ENCODE measurements at regions of chr12 and their contacts with region 1.

Region 1: DNA sequence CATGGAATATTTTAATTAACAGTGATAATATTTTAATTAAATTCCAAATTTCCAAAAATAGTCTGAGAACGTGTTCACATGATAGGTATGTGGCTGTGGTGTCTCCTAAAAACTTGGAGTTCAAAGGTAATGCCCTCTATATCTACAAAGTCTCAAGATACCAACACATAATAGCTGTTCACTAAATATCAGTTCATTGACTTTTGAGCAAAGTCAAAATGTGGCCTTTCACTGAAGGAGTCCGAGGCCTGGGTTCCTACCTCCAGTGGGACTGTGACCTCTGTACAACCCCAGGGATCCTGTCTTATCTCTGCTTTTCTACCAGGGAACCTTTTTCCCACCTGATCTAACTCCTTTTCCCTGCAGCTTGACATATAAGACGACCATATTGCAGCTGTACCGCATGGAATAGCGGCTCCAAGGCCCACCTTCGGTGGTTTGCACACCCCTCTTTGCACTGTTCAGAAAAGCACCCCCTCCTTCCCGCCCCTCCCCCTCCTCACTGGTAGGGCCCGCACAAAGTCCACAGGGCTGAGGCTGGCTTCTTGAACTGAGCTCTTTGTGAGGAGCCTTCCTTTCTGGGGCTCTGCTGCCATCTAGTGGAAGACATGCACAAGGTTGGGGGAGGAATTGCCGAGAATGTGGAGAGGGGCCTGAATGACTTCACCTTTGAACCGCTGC is 3.1 kb downstream of the CCND2 start:
- DNase-seq: peak; percentile 72 to 91 (median 81)
- H3K4me3 ChIP-seq: peak overlapping the region; percentile 2
- H3K4me3 Mint-ChIP-seq: peak overlapping the region; percentile 89 to 99 (median 97)
- H3K27ac ChIP-seq: no peak overlapping the region
- H3K27ac Mint-ChIP-seq: peak overlapping the region; percentile 52 to 100 (median 98)
- H3K4me1 ChIP-seq: peaks cover 59% of the 10 kb centered on the region
- H3K4me1 Mint-ChIP-seq: peaks cover 49 to 73% (median 67%) of the 10 kb centered on the region in 3 donors
- H3K27me3 ChIP-seq: no peaks in the 10 kb centered on the region
- H3K27me3 Mint-ChIP-seq: peaks cover 0 to 5% of the 10 kb centered on the region in 2 donors

Region 2: DNA sequence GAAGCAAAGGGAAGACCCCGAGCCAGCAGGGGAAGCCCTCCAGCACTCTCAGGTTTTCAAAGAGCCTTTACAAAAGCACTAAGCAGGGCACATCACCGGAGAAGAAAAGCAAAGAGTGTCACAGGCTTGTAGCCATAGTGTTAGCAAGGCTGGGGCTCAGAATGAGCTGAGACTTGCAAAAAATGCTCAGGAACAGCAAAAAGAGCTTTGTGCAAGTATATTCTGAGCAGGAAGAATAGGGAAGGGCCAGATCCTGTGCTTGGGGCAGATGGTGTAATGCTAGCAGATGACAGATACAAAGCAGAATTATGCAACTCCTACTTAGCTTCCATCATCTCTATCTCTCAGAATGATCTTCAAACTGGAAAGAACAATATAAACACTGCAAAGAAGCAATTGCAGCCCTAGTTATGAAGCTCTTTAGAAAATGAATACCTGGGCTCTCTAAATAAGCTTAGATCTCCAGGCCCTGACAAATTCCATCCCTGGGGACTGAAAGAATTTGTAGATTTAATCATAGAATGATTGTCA is 379.8 kb before region 1 on chr12:
- CTCF ChIA-PET with region 1: interaction called, 15 read pairs
- POLR2A ChIA-PET with region 1: interaction called, 6 read pairs
- DNase-seq: no peak
- H3K4me3 ChIP-seq: peak overlapping the region; percentile 0
- H3K4me3 Mint-ChIP-seq: peak overlapping the region; percentile 24 to 77 (median 75)
- H3K27ac ChIP-seq: no peak overlapping the region
- H3K27ac Mint-ChIP-seq: peak overlapping the region; percentile 31 to 96 (median 94)
- H3K4me1 ChIP-seq: peaks cover 79% of the 10 kb centered on the region
- H3K4me1 Mint-ChIP-seq: peaks cover 27 to 41% (median 28%) of the 10 kb centered on the region in 3 donors
- H3K27me3 ChIP-seq: no peaks in the 10 kb centered on the region
- H3K27me3 Mint-ChIP-seq: no peaks in the 10 kb centered on the region

Region 3: GRCh38 chr12:4030929-4031702 is 245.5 kb before region 1 on chr12:
- CTCF ChIA-PET with region 1: interaction called, 44 read pairs
- POLR2A ChIA-PET with region 1: interaction called, 4 read pairs
- DNase-seq: peak; percentile 62 to 79 (median 68)
- H3K4me3 ChIP-seq: peak overlapping the region; percentile 41
- H3K4me3 Mint-ChIP-seq: peak overlapping the region; percentile 70 to 91 (median 75)
- H3K27ac ChIP-seq: no peak overlapping the region
- H3K27ac Mint-ChIP-seq: peak overlapping the region in 5 of 8 donors; percentile 42 to 82 (median 68)
- H3K4me1 ChIP-seq: peaks cover 26% of the 10 kb centered on the region
- H3K4me1 Mint-ChIP-seq: peaks cover 31 to 42% (median 39%) of the 10 kb centered on the region in 3 donors
- H3K27me3 ChIP-seq: no peaks in the 10 kb centered on the region
- H3K27me3 Mint-ChIP-seq: peaks cover 0 to 7% of the 10 kb centered on the region in 2 donors

Region 4: GRCh38 chr12:4143896-4144295 is 132.8 kb before region 1 on chr12:
- CTCF ChIA-PET with region 1: interaction called, 52 read pairs
- POLR2A ChIA-PET with region 1: interaction called, 15 read pairs
- DNase-seq: peak in 1 of 5 donors; percentile 30
- H3K4me3 ChIP-seq: no peak overlapping the region
- H3K4me3 Mint-ChIP-seq: peak overlapping the region; percentile 1 to 97 (median 58)
- H3K27ac ChIP-seq: no peak overlapping the region
- H3K27ac Mint-ChIP-seq: peak overlapping the region; percentile 2 to 86 (median 80)
- H3K4me1 ChIP-seq: peaks cover 41% of the 10 kb centered on the region
- H3K4me1 Mint-ChIP-seq: peaks cover 56 to 84% (median 72%) of the 10 kb centered on the region in 3 donors
- H3K27me3 ChIP-seq: no peaks in the 10 kb centered on the region
- H3K27me3 Mint-ChIP-seq: peaks cover 0 to 3% of the 10 kb centered on the region in 2 donors

Region 5: GRCh38 chr12:4223249-4223845 is 53.3 kb before region 1 on chr12:
- CTCF ChIA-PET with region 1: no interaction called
- POLR2A ChIA-PET with region 1: no interaction called
- DNase-seq: no peak
- H3K4me3 ChIP-seq: no peak overlapping the region
- H3K4me3 Mint-ChIP-seq: no peak overlapping the region
- H3K27ac ChIP-seq: no peak overlapping the region
- H3K27ac Mint-ChIP-seq: no peak overlapping the region
- H3K4me1 ChIP-seq: no peaks in the 10 kb centered on the region
- H3K4me1 Mint-ChIP-seq: peaks cover 0 to 4% (median under 1%) of the 10 kb centered on the region in 3 donors
- H3K27me3 ChIP-seq: no peaks in the 10 kb centered on the region
- H3K27me3 Mint-ChIP-seq: peaks cover 4 to 8% of the 10 kb centered on the region in 2 donors

Region 6: GRCh38 chr12:4251216-4251891 is 25.3 kb before region 1 on chr12:
- CTCF ChIA-PET with region 1: interaction called, 16 read pairs
- POLR2A ChIA-PET with region 1: interaction called, 4 read pairs
- DNase-seq: peak in 2 of 5 donors; percentile 44 to 57
- H3K4me3 ChIP-seq: no peak overlapping the region
- H3K4me3 Mint-ChIP-seq: peak overlapping the region in 1 of 7 donors; percentile 15
- H3K27ac ChIP-seq: no peak overlapping the region
- H3K27ac Mint-ChIP-seq: peak overlapping the region in 4 of 8 donors; percentile 19 to 48 (median 26)
- H3K4me1 ChIP-seq: no peaks in the 10 kb centered on the region
- H3K4me1 Mint-ChIP-seq: peaks cover 5 to 8% (median 7%) of the 10 kb centered on the region in 3 donors
- H3K27me3 ChIP-seq: no peaks in the 10 kb centered on the region
- H3K27me3 Mint-ChIP-seq: peaks cover 2 to 21% of the 10 kb centered on the region in 2 donors

Region 7: DNA sequence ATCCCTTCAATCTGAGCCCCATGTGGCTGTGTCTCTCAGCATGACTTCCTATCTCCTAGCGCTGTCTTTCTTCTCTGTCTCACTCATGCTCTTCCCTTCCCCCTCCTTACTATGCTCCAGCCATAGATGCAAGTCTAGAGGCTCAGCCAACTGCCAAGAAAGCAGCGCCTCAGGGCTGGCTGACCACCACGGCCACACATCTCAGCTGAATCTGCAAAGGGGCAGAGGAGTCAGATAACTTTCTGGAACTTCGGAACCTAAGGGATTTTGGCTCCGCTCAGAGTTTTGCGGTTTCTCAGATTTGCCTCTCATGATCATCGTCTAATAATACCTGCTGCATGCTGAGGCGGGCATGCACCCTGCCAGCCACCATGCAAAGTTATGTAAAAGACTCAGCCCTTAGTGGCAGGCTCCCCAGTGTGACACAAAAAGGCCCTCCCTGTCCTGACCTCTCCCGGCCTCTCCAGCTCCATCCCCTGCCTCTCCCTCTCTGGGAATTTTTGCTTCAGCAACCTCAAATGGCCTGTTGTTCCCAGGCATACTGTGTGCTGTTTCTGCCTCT is 174.0 kb after region 1 on chr12:
- CTCF ChIA-PET with region 1: no interaction called
- POLR2A ChIA-PET with region 1: no interaction called
- DNase-seq: no peak
- H3K4me3 ChIP-seq: no peak overlapping the region
- H3K4me3 Mint-ChIP-seq: no peak overlapping the region
- H3K27ac ChIP-seq: no peak overlapping the region
- H3K27ac Mint-ChIP-seq: no peak overlapping the region
- H3K4me1 ChIP-seq: no peaks in the 10 kb centered on the region
- H3K4me1 Mint-ChIP-seq: no peaks in the 10 kb centered on the region
- H3K27me3 ChIP-seq: no peaks in the 10 kb centered on the region
- H3K27me3 Mint-ChIP-seq: peaks cover 10 to 59% of the 10 kb centered on the region in 2 donors

Region 8: DNA sequence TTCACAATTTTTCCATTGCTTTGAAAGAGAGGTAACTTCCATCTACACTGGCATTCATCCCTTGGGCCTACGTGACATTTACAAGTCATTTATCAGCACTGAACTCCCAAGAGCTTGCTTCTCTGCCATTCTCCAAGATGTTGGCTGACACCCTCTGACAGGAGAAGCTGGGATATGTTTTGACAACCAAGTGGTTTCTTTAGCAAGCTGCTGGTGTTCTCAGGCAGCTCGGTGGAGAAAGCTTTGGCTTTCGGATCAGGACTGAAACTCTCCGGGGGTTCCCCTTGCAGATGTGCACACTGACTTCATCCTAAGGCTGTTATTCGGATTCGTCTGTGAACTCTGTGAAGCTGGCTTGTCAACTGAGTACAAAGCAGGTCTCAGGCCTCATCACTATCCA is 782.7 kb after region 1 on chr12:
- CTCF ChIA-PET with region 1: no interaction called
- POLR2A ChIA-PET with region 1: no interaction called
- DNase-seq: no peak
- H3K4me3 ChIP-seq: no peak overlapping the region
- H3K4me3 Mint-ChIP-seq: no peak overlapping the region
- H3K27ac ChIP-seq: no peak overlapping the region
- H3K27ac Mint-ChIP-seq: no peak overlapping the region
- H3K4me1 ChIP-seq: no peaks in the 10 kb centered on the region
- H3K4me1 Mint-ChIP-seq: no peaks in the 10 kb centered on the region
- H3K27me3 ChIP-seq: no peaks in the 10 kb centered on the region
- H3K27me3 Mint-ChIP-seq: peaks cover 9 to 25% of the 10 kb centered on the region in 2 donors

Measured in CD8-positive, alpha-beta memory T cell (primary cell).